Activated CD4-positive, alpha-beta memory T cell treated with anti-CD3 and anti-CD28 coated beads for 36 hours (primary cell): ENCODE measurements at regions of chr12 and their contacts with region 1.

Region 1: GRCh38 chr12:67068761-67069450 is 200.3 kb upstream of the CAND1 start:
- DNase-seq: peak; percentile 52
- H3K4me3 Mint-ChIP-seq: peak overlapping the region; percentile 85
- H3K27ac Mint-ChIP-seq: no peak overlapping the region
- H3K4me1 Mint-ChIP-seq: peaks cover 20% of the 10 kb centered on the region
- H3K27me3 Mint-ChIP-seq: peaks cover 35% of the 10 kb centered on the region

Region 2: DNA sequence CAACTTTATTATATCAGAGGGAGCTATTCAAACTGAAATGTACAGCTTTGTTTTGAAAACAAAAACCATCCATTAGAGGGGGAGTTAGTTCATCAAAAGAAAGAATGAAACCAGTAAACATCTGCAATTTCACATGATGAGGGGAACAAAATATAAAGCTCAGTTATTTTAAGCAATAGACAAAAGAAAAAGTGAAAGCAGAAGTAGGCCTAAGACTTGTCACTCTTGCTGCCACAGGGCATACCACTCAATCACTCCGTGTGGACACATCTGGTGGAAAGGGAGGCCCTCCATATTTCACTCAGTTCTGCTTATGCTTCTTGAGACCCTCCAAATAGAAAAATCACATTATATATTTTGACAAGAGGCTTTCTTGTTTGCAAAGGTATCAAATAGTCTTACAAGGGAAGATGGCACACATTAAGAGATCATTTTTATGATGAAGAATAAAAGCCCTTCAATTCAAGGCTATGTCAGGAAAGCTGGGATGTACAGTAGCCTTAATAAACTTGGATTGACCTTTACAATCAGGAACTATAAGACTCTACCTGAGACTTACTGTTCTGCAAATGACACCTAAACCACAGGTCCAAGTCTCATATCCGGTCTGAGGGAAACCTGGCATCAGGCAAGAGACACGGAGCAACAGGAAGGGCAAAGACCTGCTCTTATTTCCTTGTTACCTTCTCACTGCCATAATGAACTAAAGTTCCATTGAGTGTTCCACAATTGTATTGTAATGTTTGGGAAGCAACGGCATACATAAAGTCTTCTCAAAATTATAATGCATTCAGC is 167.6 kb before region 1 on chr12:
- CTCF ChIA-PET with region 1: no interaction called
- POLR2A ChIA-PET with region 1: no interaction called
- intact Hi-C with region 1: loop called (anchors 10 kb)
- DNase-seq: no peak
- H3K4me3 Mint-ChIP-seq: no peak overlapping the region
- H3K27ac Mint-ChIP-seq: no peak overlapping the region
- H3K4me1 Mint-ChIP-seq: peaks cover 24% of the 10 kb centered on the region
- H3K27me3 Mint-ChIP-seq: no peaks in the 10 kb centered on the region